ENCODE measurements at regions of chr6 and their contacts with region 1.

Region 1: GRCh38 chr6:51562198-51562597 is 525.2 kb downstream of the PKHD1 start:
- DNase-seq: no peak
- H3K4me3 Mint-ChIP-seq: no peak overlapping the region
- H3K27ac Mint-ChIP-seq: no peak overlapping the region
- H3K4me1 Mint-ChIP-seq: no peaks in the 10 kb centered on the region
- H3K27me3 Mint-ChIP-seq: no peaks in the 10 kb centered on the region
- CTCF ChIP-seq: no peak

Region 2: GRCh38 chr6:51598171-51598570 is 36.0 kb after region 1 on chr6:
- CTCF ChIA-PET with region 1: no interaction called
- POLR2A ChIA-PET with region 1: no interaction called
- intact Hi-C with region 1: no loop called
- DNase-seq: no peak
- H3K4me3 Mint-ChIP-seq: no peak overlapping the region
- H3K27ac Mint-ChIP-seq: no peak overlapping the region
- H3K4me1 Mint-ChIP-seq: no peaks in the 10 kb centered on the region
- H3K27me3 Mint-ChIP-seq: no peaks in the 10 kb centered on the region
- CTCF ChIP-seq: no peak

Region 3: DNA sequence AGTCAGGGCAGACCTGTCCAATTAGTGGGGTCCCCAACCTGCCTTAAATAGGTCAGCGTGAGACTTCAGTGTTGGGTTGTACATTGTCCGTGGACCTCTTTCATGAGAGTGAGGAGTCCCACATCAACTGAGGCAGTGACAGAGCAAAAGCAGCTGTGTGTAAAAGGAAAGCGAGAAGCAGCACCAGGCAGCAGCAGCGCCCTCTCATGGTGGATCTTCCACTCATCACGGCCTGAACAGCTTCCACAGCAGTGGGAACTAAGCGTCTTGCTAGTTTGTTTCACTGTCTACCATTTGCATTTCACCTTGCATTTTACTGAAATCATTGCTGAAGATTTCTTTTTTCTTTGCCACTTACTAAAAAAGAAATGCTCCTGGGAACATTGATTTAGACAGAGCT is 191.4 kb after region 1 on chr6:
- CTCF ChIA-PET with region 1: no interaction called
- POLR2A ChIA-PET with region 1: no interaction called
- intact Hi-C with region 1: loop called (anchors 5 kb)
- DNase-seq: peak; percentile 39
- H3K4me3 Mint-ChIP-seq: no peak overlapping the region
- H3K27ac Mint-ChIP-seq: no peak overlapping the region
- H3K4me1 Mint-ChIP-seq: no peaks in the 10 kb centered on the region
- H3K27me3 Mint-ChIP-seq: no peaks in the 10 kb centered on the region
- CTCF ChIP-seq: peak; percentile 28

Region 4: GRCh38 chr6:51844336-51844735 is 282.1 kb after region 1 on chr6:
- CTCF ChIA-PET with region 1: interaction called, 39 read pairs
- POLR2A ChIA-PET with region 1: interaction called, 9 read pairs
- intact Hi-C with region 1: loop called (anchors 1 kb)
- DNase-seq: peak; percentile 23
- H3K4me3 Mint-ChIP-seq: no peak overlapping the region
- H3K27ac Mint-ChIP-seq: no peak overlapping the region
- H3K4me1 Mint-ChIP-seq: no peaks in the 10 kb centered on the region
- H3K27me3 Mint-ChIP-seq: no peaks in the 10 kb centered on the region
- CTCF ChIP-seq: peak; percentile 21

Region 5: DNA sequence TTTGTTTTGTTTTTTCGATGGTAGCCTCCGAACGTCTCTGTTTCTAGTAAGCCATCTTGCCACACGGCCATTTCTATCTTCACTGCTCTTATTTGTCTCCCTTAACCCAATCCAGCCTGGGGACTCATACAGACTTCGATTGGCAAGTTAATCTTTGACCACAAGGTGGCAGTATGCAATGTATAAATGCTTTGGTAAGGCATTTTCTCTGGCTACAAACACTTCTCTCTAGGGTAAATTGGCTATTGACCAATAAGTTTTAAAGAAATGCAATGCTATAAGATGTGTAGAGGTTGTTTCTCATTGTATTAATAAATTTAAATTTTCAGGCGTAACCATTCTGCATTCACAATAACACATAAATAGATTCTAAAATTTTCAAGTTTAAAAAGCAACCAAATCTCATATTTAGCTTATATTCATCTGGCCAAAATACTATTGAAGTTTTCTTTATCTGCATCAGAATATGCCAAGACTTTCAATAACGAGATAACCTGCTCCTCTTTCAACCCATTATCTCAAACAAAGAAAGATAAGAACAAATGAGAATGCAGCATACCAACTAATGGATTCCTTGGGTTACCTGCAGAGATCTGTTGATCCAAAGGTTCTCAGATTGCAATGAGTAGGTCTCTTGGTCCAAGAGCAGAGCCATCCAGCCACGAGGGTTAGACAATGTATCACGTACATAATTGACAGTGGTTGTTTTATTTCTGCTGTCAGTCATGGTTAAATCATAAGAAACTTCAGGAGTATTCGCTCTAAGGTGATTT is 293.3 kb after region 1 on chr6:
- CTCF ChIA-PET with region 1: interaction called, 4 read pairs
- POLR2A ChIA-PET with region 1: no interaction called
- intact Hi-C with region 1: loop called (anchors 1 kb)
- DNase-seq: peak; percentile 78
- H3K4me3 Mint-ChIP-seq: no peak overlapping the region
- H3K27ac Mint-ChIP-seq: no peak overlapping the region
- H3K4me1 Mint-ChIP-seq: peaks cover 6% of the 10 kb centered on the region
- H3K27me3 Mint-ChIP-seq: no peaks in the 10 kb centered on the region
- CTCF ChIP-seq: peak; percentile 58

Region 6: DNA sequence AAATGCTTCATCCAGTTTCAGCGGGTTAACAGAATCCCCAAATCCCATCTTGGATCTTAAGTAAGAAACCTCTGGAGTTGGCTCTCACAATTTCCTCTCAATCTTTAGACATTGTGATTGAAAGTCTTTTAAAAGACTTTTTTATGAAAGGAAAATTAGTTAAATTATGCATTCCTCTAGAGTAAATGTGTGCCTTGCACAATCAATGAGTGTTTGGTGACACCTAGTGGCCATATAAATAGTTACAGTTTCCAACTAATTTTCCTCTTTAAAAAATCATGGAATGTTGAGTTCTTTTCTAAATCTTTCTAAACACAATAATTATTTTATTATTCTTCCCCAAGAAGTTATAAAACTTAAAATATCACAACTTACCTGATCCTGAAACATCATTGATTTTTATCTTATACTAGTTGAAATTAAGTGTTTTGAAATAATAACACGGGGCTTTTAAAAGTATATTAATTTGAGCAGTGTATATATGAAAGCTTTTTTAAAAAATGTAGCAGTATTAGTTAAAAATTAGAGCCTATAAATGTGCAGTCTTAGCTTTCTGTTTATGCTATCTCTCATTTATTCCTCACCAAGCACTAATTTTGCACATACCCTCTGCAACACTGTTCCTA is 458.9 kb after region 1 on chr6:
- CTCF ChIA-PET with region 1: interaction called, 6 read pairs
- POLR2A ChIA-PET with region 1: no interaction called
- intact Hi-C with region 1: loop called (anchors 2 kb)
- DNase-seq: peak; percentile 45
- H3K4me3 Mint-ChIP-seq: no peak overlapping the region
- H3K27ac Mint-ChIP-seq: no peak overlapping the region
- H3K4me1 Mint-ChIP-seq: no peaks in the 10 kb centered on the region
- H3K27me3 Mint-ChIP-seq: peaks cover 20% of the 10 kb centered on the region
- CTCF ChIP-seq: peak; percentile 53